ENCODE measurements at regions of chr6 and their contacts with region 1.

Region 1: DNA sequence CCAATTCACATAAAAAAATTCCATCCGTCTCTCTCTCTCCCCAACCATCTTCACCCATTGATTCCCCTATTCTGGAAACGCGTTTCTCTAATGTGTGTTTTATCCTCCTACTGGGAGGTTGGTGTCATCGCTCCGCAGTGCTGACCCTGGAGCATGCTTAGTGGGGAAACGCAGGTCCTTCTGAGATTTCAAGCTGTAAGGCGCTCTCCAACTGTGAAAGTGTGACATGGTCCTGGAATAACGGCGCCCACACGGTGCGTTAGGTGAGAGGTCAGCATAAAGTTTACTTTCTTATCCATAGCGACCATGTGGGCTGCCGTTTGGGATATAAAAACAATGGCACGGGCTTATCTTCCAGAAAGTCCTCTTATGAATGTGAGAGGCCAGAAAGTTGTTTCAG is 123.9 kb downstream of the WDR27 start:
- DNase-seq: no peak

Region 2: GRCh38 chr6:168565112-168565511 is 1012.9 kb before region 1 on chr6:
- intact Hi-C with region 1: loop called in 1 of 2 experiments (anchors 5 kb)
- DNase-seq: no peak

Region 3: DNA sequence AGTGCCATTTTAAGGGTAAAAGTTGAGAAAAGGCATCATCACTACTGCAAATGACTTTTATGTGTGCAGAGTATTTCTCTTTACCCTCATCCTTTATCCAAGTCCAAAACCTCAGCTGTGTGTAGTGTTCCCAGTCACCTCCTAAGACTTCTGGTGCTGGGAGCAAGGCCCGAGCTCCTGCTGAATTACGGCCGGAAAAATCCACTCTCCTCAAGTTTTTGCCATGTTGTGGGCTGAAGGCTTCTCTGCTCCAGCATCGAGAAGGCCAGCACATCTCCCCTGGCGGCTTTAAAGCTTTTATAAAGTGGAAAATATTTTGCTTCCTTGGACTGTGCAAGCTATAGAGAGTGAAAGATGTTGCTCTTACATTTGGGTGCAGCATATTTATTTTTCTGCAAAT is 171.2 kb before region 1 on chr6:
- intact Hi-C with region 1: no loop called
- DNase-seq: peak; percentile 32